ENCODE measurements at regions of chr22 and their contacts with region 1.

Region 1: GRCh38 chr22:24951942-24952836 is at the start of gene KIAA1671:
- DNase-seq: peak; percentile 91
- ATAC-seq: peak; percentile 97
- H3K4me3 Mint-ChIP-seq: peak within 1 kb of the TSS; percentile 75
- H3K27ac Mint-ChIP-seq: no peak within 1 kb of the TSS
- H3K4me1 Mint-ChIP-seq: peaks cover 10% of the 10 kb centered on the region
- H3K27me3 Mint-ChIP-seq: peaks cover 47% of the 10 kb centered on the region
- total RNA-seq, gene KIAA1671: 12.3 to 14.0 TPM

Region 2: GRCh38 chr22:24994070-24994763 is 42.0 kb after region 1 on chr22:
- CTCF ChIA-PET with region 1: no interaction called
- POLR2A ChIA-PET with region 1: no interaction called
- intact Hi-C with region 1: loop called (anchors 1 to 2 kb)
- DNase-seq: peak; percentile 73
- ATAC-seq: peak; percentile 98
- H3K4me3 Mint-ChIP-seq: no peak overlapping the region
- H3K27ac Mint-ChIP-seq: peak overlapping the region; percentile 49
- H3K4me1 Mint-ChIP-seq: peaks cover 17% of the 10 kb centered on the region
- H3K27me3 Mint-ChIP-seq: peaks cover 29% of the 10 kb centered on the region

Region 3: DNA sequence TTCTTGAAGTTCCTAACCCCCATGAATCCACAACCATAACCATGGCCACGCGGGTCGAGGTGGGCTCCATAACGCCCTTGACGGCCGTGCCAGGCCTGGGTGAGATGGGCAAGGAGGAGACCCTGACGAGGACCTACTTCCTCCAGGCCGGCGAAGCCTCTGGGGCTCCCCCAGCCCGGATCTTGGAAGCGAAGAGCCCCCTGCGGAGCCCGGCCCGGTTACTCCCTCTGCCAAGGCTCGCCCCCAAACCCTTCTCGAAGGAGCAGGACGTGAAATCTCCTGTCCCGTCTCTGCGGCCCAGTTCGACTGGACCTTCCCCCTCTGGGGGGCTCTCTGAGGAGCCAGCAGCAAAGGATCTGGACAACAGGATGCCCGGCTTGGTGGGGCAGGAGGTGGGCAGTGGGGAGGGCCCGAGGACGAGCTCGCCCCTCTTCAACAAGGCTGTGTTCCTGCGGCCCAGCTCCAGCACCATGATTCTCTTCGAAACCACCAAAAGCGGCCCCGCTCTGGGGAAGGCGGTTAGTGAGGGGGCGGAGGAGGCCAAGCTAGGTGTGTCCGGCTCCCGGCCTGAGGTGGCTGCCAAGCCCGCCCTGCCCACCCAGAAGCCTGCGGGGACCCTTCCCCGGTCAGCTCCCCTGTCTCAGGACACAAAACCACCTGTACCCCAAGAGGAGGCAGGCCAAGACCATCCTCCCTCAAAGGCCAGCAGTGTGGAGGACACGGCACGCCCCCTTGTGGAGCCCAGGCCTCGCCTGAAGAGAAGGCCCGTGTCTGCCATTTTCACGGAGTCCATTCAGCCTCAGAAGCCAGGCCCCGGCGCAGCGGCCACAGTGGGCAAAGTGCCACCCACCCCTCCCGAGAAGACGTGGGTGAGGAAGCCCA is 76.0 kb after region 1 on chr22:
- CTCF ChIA-PET with region 1: interaction called, 3 read pairs
- POLR2A ChIA-PET with region 1: no interaction called
- intact Hi-C with region 1: loop called in 1 of 2 experiments (anchors 1 kb)
- DNase-seq: peak; percentile 57
- ATAC-seq: no peak
- H3K4me3 Mint-ChIP-seq: no peak overlapping the region
- H3K27ac Mint-ChIP-seq: no peak overlapping the region
- H3K4me1 Mint-ChIP-seq: peaks cover 10% of the 10 kb centered on the region
- H3K27me3 Mint-ChIP-seq: peaks cover 3% of the 10 kb centered on the region